Activated CD8-positive, alpha-beta memory T cell treated with anti-CD3 and anti-CD28 coated beads, Interleukin-2, amount 10 ng/mL, durations not matched to agents 7 days and 5 days (primary cell): ENCODE measurements at regions of chr11 and their contacts with region 1.

Region 1: GRCh38 chr11:61899146-61899841 is 7.9 kb upstream of the FADS3 start:
- DNase-seq: peak; percentile 92
- ATAC-seq: peak; percentile 94
- H3K4me3 Mint-ChIP-seq: no peak overlapping the region
- H3K27ac Mint-ChIP-seq: peak overlapping the region; percentile 55
- H3K4me1 Mint-ChIP-seq: peaks cover 6% of the 10 kb centered on the region
- H3K27me3 Mint-ChIP-seq: peaks cover 3% of the 10 kb centered on the region

Region 2: DNA sequence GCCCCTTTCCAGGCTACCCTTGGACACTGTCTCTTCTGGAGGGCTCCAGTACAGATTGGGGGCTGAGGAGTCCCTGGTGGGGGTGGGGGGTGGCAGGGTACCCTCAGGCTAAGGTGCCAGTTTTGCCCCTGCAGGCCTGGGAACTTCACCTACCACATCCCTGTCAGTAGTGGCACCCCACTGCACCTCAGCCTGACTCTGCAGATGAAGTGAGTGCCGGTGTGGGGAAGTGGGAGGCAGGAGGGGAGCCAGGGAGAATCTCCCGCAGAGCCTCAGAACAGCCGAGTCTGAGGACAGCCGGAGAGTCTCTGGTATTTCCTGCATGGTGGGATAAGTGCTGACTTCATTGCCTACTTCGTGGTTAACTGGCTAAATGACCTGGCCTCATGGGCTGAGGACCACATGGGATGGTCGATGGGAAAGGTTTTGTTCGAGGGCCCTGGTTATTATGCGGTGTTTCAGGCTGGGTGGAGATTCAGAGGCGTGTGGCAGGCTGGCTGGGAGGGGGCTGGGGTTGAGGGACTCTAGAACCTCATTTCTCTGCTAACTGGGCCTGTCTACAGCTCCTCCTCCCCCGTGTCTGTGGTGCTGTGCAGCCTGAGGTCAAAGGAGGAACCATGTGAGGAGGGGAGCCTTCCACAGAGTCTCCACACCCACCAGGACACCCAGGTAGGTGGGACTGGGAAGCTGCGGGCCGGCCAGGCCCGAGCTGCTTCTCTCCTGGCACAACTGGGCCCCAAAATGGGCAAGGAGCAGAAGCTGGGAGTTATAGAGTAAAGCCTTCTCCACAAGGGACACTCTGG is 115.4 kb before region 1 on chr11:
- CTCF ChIA-PET with region 1: no interaction called
- DNase-seq: no peak
- ATAC-seq: no peak
- H3K4me3 Mint-ChIP-seq: no peak overlapping the region
- H3K27ac Mint-ChIP-seq: peak overlapping the region; percentile 11
- H3K4me1 Mint-ChIP-seq: no peaks in the 10 kb centered on the region
- H3K27me3 Mint-ChIP-seq: no peaks in the 10 kb centered on the region

Region 3: GRCh38 chr11:61871158-61871597 is 28.1 kb before region 1 on chr11:
- CTCF ChIA-PET with region 1: interaction called, 40 read pairs
- DNase-seq: peak; percentile 73
- ATAC-seq: peak; percentile 95
- H3K4me3 Mint-ChIP-seq: peak overlapping the region; percentile 61
- H3K27ac Mint-ChIP-seq: no peak overlapping the region
- H3K4me1 Mint-ChIP-seq: peaks cover 5% of the 10 kb centered on the region
- H3K27me3 Mint-ChIP-seq: peaks cover 4% of the 10 kb centered on the region

Region 4: GRCh38 chr11:61885166-61885778 is 14.0 kb before region 1 on chr11:
- CTCF ChIA-PET with region 1: interaction called, 54 read pairs
- DNase-seq: no peak
- ATAC-seq: no peak
- H3K4me3 Mint-ChIP-seq: no peak overlapping the region
- H3K27ac Mint-ChIP-seq: no peak overlapping the region
- H3K4me1 Mint-ChIP-seq: no peaks in the 10 kb centered on the region
- H3K27me3 Mint-ChIP-seq: no peaks in the 10 kb centered on the region

Region 5: GRCh38 chr11:61923166-61924063 is 24.1 kb after region 1 on chr11:
- CTCF ChIA-PET with region 1: interaction called, 15 read pairs
- DNase-seq: no peak
- ATAC-seq: no peak
- H3K4me3 Mint-ChIP-seq: no peak overlapping the region
- H3K27ac Mint-ChIP-seq: no peak overlapping the region
- H3K4me1 Mint-ChIP-seq: no peaks in the 10 kb centered on the region
- H3K27me3 Mint-ChIP-seq: peaks cover 26% of the 10 kb centered on the region

Region 6: DNA sequence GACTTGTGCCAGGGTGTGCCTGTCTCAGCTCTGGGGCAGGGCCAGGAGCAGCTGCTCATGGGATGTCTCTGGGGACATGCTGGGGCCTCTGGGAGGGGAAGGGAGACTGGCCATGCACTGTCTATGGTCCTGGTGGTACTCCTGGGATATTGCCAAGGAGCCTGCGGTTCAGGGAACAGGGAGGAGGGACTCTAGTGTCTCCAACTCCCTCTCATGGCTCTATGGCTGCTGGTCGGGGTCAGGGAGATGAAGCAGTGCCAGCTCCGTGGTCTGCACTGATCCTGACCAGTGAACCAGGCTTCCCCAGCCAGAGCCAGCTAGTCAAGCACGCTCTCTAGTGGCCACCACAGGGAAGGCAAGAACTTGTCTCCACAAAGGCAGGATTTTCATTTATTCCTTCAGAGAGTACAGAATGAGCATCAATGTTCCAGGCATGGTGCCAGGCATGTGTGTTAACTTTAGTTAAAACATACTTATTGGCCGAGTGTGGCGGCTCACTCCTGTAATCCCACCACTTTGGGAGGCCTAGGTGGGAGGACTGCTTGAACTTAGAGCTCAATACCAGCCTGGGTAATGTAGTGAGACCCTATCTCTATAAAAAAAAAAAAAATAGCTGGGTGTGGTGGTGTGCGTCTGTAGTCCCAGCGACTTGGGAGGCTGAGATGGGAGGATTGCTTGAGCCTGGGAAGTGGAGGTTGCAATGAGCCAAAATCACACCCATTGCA is 48.4 kb after region 1 on chr11:
- CTCF ChIA-PET with region 1: interaction called, 179 read pairs
- DNase-seq: peak; percentile 77
- ATAC-seq: peak; percentile 84
- H3K4me3 Mint-ChIP-seq: no peak overlapping the region
- H3K27ac Mint-ChIP-seq: no peak overlapping the region
- H3K4me1 Mint-ChIP-seq: no peaks in the 10 kb centered on the region
- H3K27me3 Mint-ChIP-seq: peaks cover 4% of the 10 kb centered on the region